GM10248 (cell line): ENCODE measurements at regions of chr5 and their contacts with region 1.

Region 1: GRCh38 chr5:31809050-31809870 is 170.3 kb downstream of the PDZD2 start:
- DNase-seq: peak; percentile 62
- CTCF ChIP-seq: peak; percentile 69

Region 2: GRCh38 chr5:31573494-31574142 is 235.6 kb before region 1 on chr5:
- CTCF ChIA-PET with region 1: interaction called, 10 read pairs
- POLR2A ChIA-PET with region 1: no interaction called
- DNase-seq: peak; percentile 59
- CTCF ChIP-seq: no peak

Region 3: GRCh38 chr5:31581498-31582099 is 227.7 kb before region 1 on chr5:
- CTCF ChIA-PET with region 1: interaction called, 17 read pairs
- POLR2A ChIA-PET with region 1: no interaction called
- DNase-seq: no peak
- CTCF ChIP-seq: peak; percentile 40

Region 4: DNA sequence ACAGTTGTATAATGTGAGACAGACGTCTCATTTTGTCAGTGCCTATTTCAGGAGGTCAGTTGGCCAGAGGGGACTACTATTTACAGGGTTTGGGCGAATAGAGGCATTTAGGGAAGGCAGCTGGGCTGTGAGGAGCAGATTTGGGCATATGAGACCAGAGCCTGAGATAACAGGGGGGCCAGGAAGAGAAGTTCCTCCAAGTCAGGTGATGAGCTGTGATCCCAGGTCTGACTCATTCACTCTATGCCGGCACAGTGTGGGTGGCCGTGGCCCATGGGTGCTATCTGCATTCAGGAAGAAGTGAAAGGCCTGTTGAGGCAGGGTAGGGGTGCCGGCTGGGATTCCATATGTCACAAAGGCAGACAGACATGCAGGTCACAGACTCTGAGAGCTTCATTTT is 27.5 kb before region 1 on chr5:
- CTCF ChIA-PET with region 1: interaction called, 12 read pairs
- POLR2A ChIA-PET with region 1: no interaction called
- DNase-seq: no peak
- CTCF ChIP-seq: no peak

Region 5: DNA sequence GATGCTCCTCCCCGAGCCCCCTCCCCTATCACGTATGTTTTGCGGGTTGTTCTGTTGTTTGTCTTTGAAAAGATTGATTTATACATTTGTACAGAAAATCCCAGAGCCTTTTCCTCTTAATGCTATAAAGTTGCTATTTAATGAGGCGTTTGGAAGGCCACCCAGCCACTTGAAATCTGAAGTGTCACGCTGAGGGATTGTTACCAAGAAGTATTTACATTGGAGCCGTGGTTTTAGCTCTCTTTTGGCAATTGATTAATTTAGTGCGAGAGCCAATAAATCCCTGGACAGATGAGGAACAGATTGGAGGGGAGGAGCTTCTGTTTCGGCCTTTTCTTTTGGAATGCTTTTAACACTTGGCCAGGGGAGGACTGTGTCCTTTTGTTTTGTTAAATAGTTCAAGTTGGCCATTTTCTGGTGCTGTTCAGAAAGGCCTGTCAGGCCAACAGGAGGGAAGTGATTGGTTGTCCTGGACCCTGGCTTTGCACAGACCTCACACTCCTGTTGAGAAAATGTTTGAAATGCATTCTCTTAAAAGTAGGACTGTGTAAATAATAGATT is 79.8 kb after region 1 on chr5:
- CTCF ChIA-PET with region 1: no interaction called
- POLR2A ChIA-PET with region 1: no interaction called
- DNase-seq: no peak
- CTCF ChIP-seq: no peak